ENCODE measurements at regions of chr5 and their contacts with region 1.

Region 1: GRCh38 chr5:136249678-136250266 is 56.8 kb upstream of the SMIM32 start:
- DNase-seq: peak; percentile 33 to 61
- H3K4me3 ChIP-seq: no peak overlapping the region
- H3K27ac ChIP-seq: no peak overlapping the region
- H3K4me1 ChIP-seq: no peaks in the 10 kb centered on the region
- H3K27me3 ChIP-seq: no peaks in the 10 kb centered on the region; a peak in 2 of 7 replicates
- CTCF ChIP-seq: peak; percentile 86 to 95 (median 92)
- EP300 ChIP-seq: no peak
- POLR2A ChIP-seq: no peak
- RAD21 ChIP-seq: peak; percentile 97 to 98

Region 2: GRCh38 chr5:136103118-136103517 is 146.7 kb before region 1 on chr5:
- CTCF ChIA-PET with region 1: no interaction called
- POLR2A ChIA-PET with region 1: no interaction called
- DNase-seq: no peak
- H3K4me3 ChIP-seq: no peak overlapping the region
- H3K27ac ChIP-seq: no peak overlapping the region
- H3K4me1 ChIP-seq: peaks cover 0 to 9% (median 2%) of the 10 kb centered on the region in 4 experiments; a peak in 3 of 7 replicates
- H3K27me3 ChIP-seq: no peaks in the 10 kb centered on the region; a peak in 1 of 7 replicates
- CTCF ChIP-seq: no peak
- EP300 ChIP-seq: no peak
- POLR2A ChIP-seq: no peak
- RAD21 ChIP-seq: no peak

Region 3: DNA sequence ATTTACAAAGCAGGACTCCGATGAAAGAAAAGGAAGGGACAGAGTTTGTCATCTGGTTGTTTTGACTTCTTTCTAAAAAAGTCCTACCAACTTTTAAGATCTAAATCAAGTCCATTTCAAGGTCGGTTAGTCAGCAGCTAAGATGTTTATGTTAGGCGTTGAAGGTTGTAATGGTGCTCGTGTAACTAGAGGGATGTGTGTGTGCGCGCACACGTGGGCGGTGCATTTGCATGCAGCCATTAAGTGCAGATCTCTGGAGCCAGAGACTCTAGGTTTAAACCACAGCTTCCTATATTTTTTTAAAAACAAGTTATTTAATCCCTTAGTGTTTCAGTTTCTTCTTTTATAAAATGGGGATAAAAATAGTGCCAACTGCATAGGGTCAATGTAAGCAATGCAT is 20.2 kb after region 1 on chr5:
- CTCF ChIA-PET with region 1: interaction called, 11 read pairs
- POLR2A ChIA-PET with region 1: no interaction called
- DNase-seq: no peak
- H3K4me3 ChIP-seq: no peak overlapping the region
- H3K27ac ChIP-seq: no peak overlapping the region
- H3K4me1 ChIP-seq: no peaks in the 10 kb centered on the region
- H3K27me3 ChIP-seq: no peaks in the 10 kb centered on the region; a peak in 1 of 7 replicates
- CTCF ChIP-seq: no peak
- EP300 ChIP-seq: no peak
- POLR2A ChIP-seq: no peak
- RAD21 ChIP-seq: no peak

Region 4: DNA sequence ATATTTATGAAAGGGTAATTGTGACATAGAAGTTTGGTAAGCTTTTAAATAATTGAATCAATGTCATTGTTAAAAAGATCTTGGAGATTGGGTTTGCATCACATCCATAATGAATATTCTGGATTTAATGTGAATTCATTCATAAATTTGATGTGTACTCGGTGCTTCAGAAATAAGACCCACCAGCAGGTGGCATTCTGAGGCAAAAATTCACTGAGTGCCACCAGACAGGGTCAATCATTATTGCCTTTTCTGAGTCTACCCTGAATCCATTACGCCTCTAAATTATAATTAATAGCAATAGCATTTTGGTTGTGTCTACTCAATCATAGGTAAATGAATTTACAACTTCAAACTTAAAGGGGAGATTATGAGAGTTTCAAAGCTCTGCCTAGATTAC is 114.5 kb after region 1 on chr5:
- CTCF ChIA-PET with region 1: interaction called, 35 read pairs
- POLR2A ChIA-PET with region 1: no interaction called
- DNase-seq: no peak
- H3K4me3 ChIP-seq: no peak overlapping the region
- H3K27ac ChIP-seq: no peak overlapping the region
- H3K4me1 ChIP-seq: no peaks in the 10 kb centered on the region
- H3K27me3 ChIP-seq: peaks cover 0 to 4% (median under 1%) of the 10 kb centered on the region in 4 experiments; a peak in 2 of 7 replicates
- CTCF ChIP-seq: peak in 2 of 3 experiments; percentile 44 to 47; a peak in 3 of 4 replicates
- EP300 ChIP-seq: no peak
- POLR2A ChIP-seq: no peak
- RAD21 ChIP-seq: peak; percentile 70 to 72

Region 5: GRCh38 chr5:136424835-136425584 is 175.2 kb after region 1 on chr5:
- CTCF ChIA-PET with region 1: interaction called, 18 read pairs
- POLR2A ChIA-PET with region 1: no interaction called
- DNase-seq: peak; percentile 58 to 97
- H3K4me3 ChIP-seq: no peak overlapping the region
- H3K27ac ChIP-seq: no peak overlapping the region
- H3K4me1 ChIP-seq: peaks cover 0 to 4% (median under 1%) of the 10 kb centered on the region in 4 experiments; a peak in 4 of 7 replicates
- H3K27me3 ChIP-seq: no peaks in the 10 kb centered on the region; a peak in 2 of 7 replicates
- CTCF ChIP-seq: peak; percentile 83 to 92 (median 86)
- EP300 ChIP-seq: no peak
- POLR2A ChIP-seq: no peak
- RAD21 ChIP-seq: peak; percentile 92 to 96

Region 6: GRCh38 chr5:136769900-136770684 is 520.3 kb after region 1 on chr5:
- CTCF ChIA-PET with region 1: interaction called, 70 read pairs
- POLR2A ChIA-PET with region 1: no interaction called
- DNase-seq: peak; percentile 53 to 87
- H3K4me3 ChIP-seq: no peak overlapping the region
- H3K27ac ChIP-seq: no peak overlapping the region
- H3K4me1 ChIP-seq: peaks cover 0 to 2% (median 1%) of the 10 kb centered on the region in 4 experiments; a peak in 3 of 7 replicates
- H3K27me3 ChIP-seq: peaks cover 0 to 1% (median 0%) of the 10 kb centered on the region in 4 experiments; a peak in 1 of 7 replicates
- CTCF ChIP-seq: peak; percentile 87 to 96 (median 91)
- EP300 ChIP-seq: no peak
- POLR2A ChIP-seq: no peak
- RAD21 ChIP-seq: peak; percentile 99 to 100